ENCODE measurements at regions of chr1 and their contacts with region 1.

Region 1: DNA sequence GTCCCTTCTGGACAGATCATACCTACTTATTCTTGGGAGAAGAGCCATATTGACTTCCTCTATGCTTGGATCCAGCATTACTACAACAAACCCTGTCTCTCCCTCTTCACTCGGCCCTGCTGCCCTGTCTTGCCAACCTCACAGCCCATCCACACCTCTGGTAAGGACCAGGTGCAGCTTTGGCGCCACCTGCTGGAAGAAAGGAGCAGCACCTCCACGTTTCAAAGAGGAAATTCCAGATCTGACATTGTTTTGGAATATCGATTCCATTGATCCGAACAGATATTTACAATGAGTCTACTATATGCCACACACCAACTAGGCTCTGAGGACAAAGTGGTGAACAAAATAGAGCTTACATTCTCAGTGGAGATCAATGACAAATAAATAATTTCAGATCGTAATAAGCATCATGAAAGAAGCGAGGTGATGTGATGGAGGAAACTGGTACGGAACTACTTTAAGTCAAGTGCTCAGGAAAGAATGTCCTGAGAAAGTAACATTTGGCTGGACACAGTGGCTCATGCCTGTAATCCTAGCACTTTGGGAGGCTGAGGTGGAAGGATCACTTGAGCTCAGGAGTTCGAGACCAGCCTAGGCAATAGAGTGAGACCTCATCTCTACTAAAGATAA is 18.7 kb downstream of the MFSD2A start:
- DNase-seq: peak; percentile 73 to 94
- H3K4me3 ChIP-seq: no peak overlapping the region
- CTCF ChIP-seq: peak in 1 of 3 donors; percentile 94
- POLR2A ChIP-seq: no peak

Region 2: DNA sequence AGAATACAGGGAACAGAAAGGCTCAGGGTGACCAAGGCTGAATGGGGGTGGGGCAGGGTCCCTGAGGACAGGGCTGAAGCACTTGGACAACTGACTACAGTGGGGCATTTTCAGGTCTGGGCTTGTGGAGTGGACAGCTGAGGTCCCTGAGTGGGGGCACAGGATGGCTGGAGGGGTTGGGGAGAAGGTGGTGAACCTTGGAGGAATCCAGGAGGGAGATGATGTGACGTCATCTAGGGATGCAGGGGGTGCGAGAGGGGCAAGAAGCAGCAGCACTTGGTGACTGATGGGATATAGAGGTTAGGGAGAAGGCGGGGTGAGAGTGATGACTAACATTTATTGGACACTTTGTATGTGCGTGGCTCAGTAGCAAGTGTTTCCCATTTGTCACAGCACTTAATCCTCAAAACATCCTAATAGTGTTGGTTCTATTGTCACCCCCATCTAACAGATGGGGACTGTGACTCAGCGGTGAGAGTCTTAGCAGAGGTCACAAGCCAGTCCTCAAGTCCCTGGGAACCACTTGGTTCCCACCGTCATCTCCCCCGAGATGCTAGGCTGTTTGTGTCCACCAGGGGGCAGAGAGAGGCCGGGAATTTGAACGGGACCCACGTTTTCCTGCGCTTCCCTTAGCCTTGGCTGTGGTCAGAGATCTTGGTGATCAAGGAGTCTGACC is 157.1 kb before region 1 on chr1:
- intact Hi-C with region 1: loop called (anchors 5 kb)
- DNase-seq: peak; percentile 62 to 92
- H3K4me3 ChIP-seq: no peak overlapping the region
- CTCF ChIP-seq: peak in 1 of 3 donors; percentile 85
- POLR2A ChIP-seq: no peak

Region 3: GRCh38 chr1:39917825-39918224 is 55.8 kb before region 1 on chr1:
- intact Hi-C with region 1: loop called (anchors 2 kb)
- DNase-seq: no peak
- H3K4me3 ChIP-seq: no peak overlapping the region
- CTCF ChIP-seq: no peak
- POLR2A ChIP-seq: no peak

Region 4: DNA sequence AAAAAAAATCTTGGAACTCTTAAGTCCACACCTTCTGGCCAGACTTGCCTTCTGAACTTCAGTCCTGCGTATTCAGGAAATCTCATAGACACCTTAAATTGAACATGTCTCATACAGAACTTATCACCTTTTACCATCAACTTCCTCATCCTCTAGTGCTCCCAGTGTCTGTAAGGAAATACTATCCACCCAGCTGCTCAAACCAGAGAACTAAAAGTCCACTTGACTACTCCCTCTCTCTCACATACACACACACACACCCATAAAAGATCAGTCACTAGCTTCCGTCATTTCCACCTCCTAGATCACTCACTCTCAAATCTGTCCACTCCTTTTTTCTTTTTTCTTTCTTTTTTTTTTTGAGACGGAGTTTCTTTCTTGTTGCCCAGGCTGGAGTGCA is 56.0 kb after region 1 on chr1:
- intact Hi-C with region 1: loop called (anchors 10 kb)
- DNase-seq: no peak
- H3K4me3 ChIP-seq: no peak overlapping the region
- CTCF ChIP-seq: no peak
- POLR2A ChIP-seq: no peak

Region 5: DNA sequence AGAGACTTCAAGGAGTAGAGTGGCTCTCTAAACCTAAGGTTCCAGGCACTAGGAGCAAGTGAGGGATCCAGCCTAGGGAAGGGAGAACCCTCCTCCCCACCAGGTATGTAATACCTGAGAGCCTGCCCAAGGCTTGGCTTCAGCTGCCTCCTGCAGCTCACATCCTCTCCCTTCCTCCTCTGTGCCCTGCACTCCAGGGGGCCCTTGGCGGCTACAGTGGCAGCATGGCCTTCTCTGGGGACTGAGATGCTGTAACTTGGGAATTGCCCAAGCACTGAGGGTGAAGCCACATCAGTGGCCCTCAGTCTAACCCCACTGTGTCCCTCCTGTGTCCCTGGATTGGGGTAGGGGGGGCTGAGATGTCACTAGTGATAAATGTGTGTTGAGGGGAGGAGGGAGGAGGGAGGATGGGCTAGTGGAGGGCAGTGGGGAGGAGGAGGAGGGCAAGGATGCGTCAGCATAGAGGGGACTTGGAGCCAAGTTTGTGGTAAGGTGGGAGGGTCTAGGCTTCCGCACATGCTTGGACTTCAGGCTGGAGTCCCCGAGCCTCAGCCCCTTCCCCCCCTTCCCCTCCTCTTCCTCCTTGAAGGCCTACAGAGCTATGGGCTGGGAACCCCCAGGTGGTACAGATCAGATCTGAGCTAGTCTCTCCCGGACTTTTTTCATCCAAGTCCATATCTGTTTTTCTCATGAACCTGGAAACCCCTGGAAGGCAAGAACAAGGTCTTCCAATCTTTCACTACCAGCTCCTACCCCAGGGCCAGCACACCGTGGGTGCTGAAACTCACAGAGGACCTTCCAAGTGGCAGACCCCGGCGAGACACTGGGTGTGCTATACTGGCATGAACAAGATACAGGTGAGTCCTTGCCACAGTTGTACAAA is 326.0 kb after region 1 on chr1:
- intact Hi-C with region 1: no loop called
- DNase-seq: peak in 1 of 2 donors; percentile 58
- H3K4me3 ChIP-seq: no peak overlapping the region
- CTCF ChIP-seq: no peak
- POLR2A ChIP-seq: no peak

Region 6: GRCh38 chr1:40385437-40386358 is 412.1 kb after region 1 on chr1:
- intact Hi-C with region 1: no loop called
- DNase-seq: no peak
- H3K4me3 ChIP-seq: no peak overlapping the region
- CTCF ChIP-seq: no peak
- POLR2A ChIP-seq: no peak

Measured in lower leg skin (tissue), 4 donors.